Psoas muscle (tissue), 8 donors: ENCODE measurements at regions of chr1 and their contacts with region 1.

Region 1: DNA sequence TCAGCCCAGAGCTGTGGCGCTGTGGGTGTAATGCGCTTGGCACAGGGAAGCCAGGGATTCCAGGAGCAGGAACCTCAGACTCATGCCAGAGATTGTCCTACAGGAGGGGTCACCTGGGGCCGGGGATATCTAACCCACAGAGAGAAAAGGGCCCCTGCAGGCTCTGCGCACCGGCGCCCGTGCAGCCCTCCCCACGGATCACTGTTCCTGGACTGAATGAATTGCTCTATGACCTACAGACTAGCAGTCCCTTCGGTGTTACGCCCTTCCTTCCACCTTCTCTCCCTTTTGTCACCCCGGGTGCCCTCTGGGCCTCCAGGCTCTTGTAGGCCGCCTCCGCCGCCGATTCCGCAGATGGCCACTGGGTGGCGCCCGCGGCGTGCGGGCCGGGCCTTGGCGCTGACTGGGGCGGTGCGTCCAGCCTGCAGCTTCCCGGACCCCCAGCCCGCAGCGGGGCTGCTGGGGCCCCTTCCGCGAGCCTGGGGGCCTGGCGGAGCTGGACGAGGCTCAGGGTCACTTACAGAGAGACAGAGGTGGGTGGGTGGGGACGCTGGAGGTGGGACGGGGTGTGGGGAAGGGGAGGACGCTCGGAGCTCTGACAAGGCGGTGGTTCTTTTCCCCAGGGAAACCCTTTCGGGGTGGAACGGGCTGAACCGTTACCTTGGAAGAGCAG is 101.3 kb downstream of the IER5 start:
- DNase-seq: peak; percentile 65 to 80
- ATAC-seq: peak; percentile 92 to 99 (median 95)
- H3K4me3 ChIP-seq: peak overlapping the region; percentile 43
- H3K27ac ChIP-seq: no peak overlapping the region
- H3K4me1 ChIP-seq: peaks cover 2% of the 10 kb centered on the region
- H3K27me3 ChIP-seq: no peaks in the 10 kb centered on the region
- CTCF ChIP-seq: peak; percentile 99

Region 2: DNA sequence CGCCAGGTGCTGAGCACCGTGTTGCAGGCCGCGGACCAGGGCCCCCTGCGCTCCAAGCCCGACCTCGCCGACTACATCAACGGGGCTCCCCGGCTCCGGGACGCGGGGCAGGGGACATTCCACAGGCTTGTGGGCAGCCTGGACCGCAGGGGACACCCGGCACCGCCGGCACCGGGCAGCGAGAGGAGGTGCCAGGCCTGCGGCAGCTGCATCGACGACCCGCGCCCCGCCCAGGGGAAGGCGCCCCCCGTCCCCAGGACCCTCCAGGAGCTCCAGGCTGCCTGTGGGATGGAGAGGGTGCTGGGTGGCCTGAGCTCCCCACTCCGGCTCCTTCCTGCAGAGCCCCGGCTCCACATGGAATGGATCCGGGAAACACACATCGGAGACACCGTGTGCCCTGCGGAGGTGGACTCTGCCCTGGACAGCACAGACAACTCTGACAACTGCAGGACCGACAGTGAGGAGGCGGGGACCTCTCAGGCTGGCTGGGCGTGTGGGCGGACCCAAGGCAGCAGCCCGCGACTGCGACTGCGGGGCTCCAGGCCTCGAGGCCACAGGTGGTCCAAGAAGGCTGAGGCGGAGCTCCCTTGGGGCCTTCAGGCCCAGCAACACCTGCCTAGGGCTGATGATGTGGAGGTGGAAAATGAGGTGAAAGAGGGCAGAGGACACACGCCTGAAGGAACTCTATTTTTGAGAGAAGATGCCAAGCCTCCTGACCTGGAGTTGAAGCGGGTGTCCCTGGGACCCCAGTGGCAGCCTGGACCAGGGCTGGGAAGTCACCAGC is 254.3 kb before region 1 on chr1:
- intact Hi-C with region 1: no loop called
- DNase-seq: no peak
- ATAC-seq: peak in 1 of 4 donors; percentile 14
- H3K4me3 ChIP-seq: no peak overlapping the region
- H3K27ac ChIP-seq: no peak overlapping the region
- H3K4me1 ChIP-seq: peaks cover 9% of the 10 kb centered on the region
- H3K27me3 ChIP-seq: no peaks in the 10 kb centered on the region
- CTCF ChIP-seq: no peak

Region 3: DNA sequence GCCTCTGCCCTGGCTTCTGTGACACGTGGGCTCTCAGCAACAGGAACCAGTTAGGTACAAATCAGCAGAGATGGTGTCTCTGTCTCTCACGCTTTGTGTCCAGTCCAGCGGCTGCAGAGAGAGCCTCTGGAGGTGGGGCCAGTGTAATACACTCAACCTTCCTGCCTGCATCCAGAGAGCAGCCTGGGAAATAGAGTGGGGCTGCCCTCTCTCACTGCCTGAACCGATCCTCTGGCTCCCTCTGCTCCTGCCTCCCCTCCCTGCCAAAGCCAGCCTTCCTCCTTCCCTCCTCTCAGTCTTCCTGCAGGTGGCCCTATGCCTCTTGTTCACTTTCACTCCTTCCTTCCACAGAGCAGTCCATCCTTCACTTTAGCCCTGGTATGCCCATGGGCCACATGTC is 871.8 kb after region 1 on chr1 and contains the start of gene ZNF648:
- intact Hi-C with region 1: no loop called
- DNase-seq: no peak
- ATAC-seq: no peak
- H3K4me3 ChIP-seq: no peak within 1 kb of the TSS
- H3K27ac ChIP-seq: no peak within 1 kb of the TSS
- H3K4me1 ChIP-seq: no peaks in the 10 kb centered on the region
- H3K27me3 ChIP-seq: peaks cover 0 to 5% (median 0%) of the 10 kb centered on the region in 3 donors
- CTCF ChIP-seq: no peak
- total RNA-seq, gene ZNF648: 0.06 TPM in 1 of 4 donors, not detected in the others

Region 4: GRCh38 chr1:182101415-182102042 is 911.7 kb after region 1 on chr1:
- intact Hi-C with region 1: loop called in 1 of 2 experiments (anchors 5 kb)
- DNase-seq: no peak
- ATAC-seq: peak in 2 of 4 donors; percentile 39 to 42
- H3K4me3 ChIP-seq: no peak overlapping the region
- H3K27ac ChIP-seq: no peak overlapping the region
- H3K4me1 ChIP-seq: no peaks in the 10 kb centered on the region
- H3K27me3 ChIP-seq: no peaks in the 10 kb centered on the region
- CTCF ChIP-seq: no peak